ENCODE measurements at regions of chr1 and their contacts with region 1.

Region 1: DNA sequence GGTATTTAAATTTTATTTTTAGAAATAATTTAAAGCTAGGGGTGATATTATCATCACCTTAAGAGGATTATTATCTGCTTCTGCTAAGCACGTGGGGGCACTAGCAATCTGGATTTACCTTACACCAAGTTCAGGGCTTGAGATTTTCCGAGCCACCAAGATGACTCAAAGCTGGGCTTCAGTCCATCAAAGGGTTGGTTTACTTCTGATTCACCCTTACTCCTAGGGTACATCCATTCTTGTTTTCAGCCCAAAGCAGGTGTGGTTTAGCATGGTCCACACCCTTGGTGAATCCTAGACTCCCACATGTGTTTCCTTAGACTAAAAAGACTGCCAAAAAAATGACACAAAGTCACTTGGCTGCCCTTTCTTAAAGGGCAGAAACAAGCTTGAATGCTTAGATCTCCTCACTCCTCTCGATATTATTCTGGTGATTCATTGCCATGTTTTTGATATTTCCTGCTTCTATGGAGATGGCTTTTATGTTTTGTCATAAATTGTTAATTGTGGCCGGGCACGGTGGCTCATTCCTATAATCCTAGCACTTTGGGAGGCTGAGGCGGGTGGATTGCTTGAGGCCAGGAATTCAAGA is 9.8 kb upstream of the PRSS38 start:
- DNase-seq: peak; percentile 98
- H3K27ac ChIP-seq: peak overlapping the region; percentile 78
- CTCF ChIP-seq: peak; percentile 51

Region 2: DNA sequence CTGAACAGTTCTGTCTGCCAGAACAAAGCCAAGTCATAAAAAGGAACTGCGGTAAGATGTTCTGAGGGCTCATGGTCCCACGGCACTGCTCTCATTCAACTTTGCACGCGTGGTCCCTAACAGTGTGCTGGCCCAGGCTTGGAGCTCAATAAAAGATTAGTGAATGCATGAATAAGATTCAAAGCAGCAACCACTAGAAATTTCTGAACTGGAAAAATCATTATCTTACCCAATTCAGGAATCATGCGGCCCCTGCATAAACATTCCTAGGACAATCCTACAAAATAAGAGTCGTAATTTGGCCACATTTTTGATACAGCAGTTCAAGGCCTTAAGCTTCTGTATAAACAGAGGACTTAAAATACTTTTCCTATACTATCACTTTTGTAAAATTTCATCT is 475.0 kb before region 1 on chr1:
- CTCF ChIA-PET with region 1: no interaction called
- POLR2A ChIA-PET with region 1: no interaction called
- DNase-seq: no peak
- H3K27ac ChIP-seq: no peak overlapping the region
- CTCF ChIP-seq: no peak

Region 3: DNA sequence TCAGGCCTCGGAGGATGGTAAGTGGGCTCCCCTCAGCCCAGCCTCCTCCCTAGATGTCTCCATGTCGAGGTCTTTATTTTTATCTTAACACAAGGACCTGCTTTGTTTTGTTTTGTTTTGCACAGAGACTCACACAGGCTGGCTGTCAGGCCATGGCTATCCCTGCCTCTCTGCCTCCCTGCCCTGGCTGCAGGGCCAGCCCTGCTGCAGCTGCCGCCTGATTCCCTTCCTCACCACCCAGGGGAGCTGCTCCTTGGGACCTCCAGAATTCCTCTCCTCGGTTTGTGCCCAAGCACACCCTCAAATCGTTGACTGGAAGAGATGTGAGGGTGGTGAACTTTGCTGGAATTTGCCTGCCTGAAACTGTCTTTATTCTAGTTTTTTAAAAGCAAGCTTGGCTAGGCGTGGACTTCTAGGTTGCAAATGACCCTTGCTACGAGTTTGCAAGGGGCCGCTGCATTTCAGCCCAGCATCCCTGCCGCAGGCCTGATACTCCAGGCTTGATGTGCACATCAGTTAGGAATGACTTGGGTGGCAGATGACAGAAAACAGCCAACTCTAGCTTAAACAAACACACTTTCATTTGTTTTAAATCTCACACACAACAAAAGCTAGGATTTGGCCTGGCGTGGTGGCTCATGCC is 104.9 kb after region 1 on chr1:
- CTCF ChIA-PET with region 1: interaction called, 11 read pairs
- POLR2A ChIA-PET with region 1: no interaction called
- DNase-seq: no peak
- H3K27ac ChIP-seq: peak overlapping the region; percentile 70
- CTCF ChIP-seq: no peak